Aorta (tissue), 5 donors: ENCODE measurements at regions of chr18 and their contacts with region 1.

Region 1: DNA sequence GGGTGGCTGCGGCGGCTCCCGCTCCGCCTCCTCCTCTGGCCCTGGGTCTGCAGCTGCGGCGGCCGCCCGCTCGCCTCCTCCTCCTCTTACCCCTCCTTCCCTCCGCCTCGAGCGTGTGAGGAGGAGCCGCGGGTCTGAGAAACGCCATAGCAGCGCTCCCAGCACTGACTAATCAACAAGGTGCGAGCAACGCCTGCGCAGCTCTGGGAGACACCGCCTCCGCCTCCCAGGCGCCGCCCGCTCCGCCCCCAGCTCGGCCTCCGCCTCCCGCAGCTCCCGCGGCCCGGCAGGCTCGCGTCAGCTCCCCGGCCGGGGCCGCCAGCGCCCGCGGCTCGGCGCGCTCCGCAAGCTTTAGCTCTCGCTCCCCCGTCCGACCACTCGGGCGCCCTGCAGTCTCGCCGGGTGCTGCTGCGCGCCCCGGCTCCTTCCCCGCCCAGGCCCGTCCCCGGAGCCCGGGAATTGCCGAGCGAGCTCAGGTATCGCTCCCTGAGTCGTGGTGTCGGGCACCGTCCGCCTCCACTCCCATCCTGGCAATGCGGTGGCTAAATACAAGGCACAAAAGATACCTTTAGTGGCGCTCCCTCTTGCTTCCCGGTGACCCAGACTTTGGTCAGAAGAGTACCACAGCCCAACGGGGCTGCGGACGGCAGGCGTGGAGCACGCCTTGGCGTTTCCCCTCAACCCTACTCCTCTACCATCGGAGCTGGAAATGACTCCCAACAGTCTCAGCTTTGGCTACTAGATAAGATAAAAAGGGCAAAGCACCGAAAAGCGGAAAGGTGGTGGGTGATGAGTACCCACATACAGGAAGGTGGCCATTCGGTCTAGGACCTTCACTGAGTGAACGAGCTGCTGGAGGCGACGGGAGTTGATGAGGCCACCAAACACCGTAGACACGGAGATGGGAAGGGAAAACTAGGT is at the start of gene GAREM1:
- DNase-seq: peak; percentile 97
- ATAC-seq: peak; percentile 96
- H3K4me3 ChIP-seq: peak within 1 kb of the TSS; percentile 93 to 100
- H3K27ac ChIP-seq: peak within 1 kb of the TSS; percentile 87 to 88
- H3K4me1 ChIP-seq: peaks cover 0 to 7% of the 10 kb centered on the region in 2 donors
- H3K27me3 ChIP-seq: no peaks in the 10 kb centered on the region
- total RNA-seq, gene GAREM1: 10.7 to 24.0 TPM

Region 2: DNA sequence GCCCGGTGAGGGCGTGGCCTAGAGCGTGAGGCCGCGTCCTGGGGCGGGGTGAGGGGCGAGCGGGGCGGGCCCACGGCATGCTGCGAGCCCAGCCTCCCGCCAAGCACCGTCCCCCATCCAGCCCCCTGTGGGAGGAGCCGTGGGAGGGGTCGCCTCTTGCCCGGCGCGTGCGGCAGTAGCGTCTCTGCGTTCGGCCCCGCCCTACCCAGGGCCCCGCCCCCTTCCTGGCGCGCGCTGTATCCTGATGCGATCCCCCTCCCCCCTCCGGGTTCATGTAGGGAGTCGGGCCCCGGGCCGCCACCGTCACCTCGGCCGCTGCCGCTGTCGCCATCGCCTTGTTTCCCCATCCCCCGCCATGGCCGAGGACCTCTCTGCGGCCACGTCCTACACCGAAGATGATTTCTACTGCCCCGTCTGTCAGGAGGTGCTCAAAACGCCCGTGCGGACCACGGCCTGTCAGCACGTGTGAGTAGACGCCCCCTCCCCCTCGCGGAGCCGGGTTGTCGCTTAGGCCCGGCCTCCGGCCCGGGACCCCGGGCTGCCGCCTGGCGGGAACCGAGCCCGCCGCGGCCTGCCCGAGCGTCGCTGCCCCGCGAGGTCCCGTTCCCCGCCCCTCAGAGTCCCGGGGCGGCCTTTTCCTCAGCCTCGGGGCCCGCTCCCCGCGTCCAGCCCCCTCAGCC is 378.4 kb before region 1 on chr18:
- intact Hi-C with region 1: loop called (anchors 5 to 10 kb)
- DNase-seq: peak; percentile 100
- ATAC-seq: peak; percentile 99
- H3K4me3 ChIP-seq: peak overlapping the region; percentile 51 to 57
- H3K27ac ChIP-seq: peak overlapping the region; percentile 3 to 50
- H3K4me1 ChIP-seq: no peaks in the 10 kb centered on the region
- H3K27me3 ChIP-seq: no peaks in the 10 kb centered on the region

Region 3: GRCh38 chr18:32158108-32158624 is 312.8 kb before region 1 on chr18:
- intact Hi-C with region 1: loop called in 1 of 2 experiments (anchors 5 kb)
- DNase-seq: peak; percentile 84 to 89
- ATAC-seq: peak; percentile 96
- H3K4me3 ChIP-seq: peak overlapping the region; percentile 42 to 52
- H3K27ac ChIP-seq: no peak overlapping the region
- H3K4me1 ChIP-seq: no peaks in the 10 kb centered on the region
- H3K27me3 ChIP-seq: no peaks in the 10 kb centered on the region

Region 4: DNA sequence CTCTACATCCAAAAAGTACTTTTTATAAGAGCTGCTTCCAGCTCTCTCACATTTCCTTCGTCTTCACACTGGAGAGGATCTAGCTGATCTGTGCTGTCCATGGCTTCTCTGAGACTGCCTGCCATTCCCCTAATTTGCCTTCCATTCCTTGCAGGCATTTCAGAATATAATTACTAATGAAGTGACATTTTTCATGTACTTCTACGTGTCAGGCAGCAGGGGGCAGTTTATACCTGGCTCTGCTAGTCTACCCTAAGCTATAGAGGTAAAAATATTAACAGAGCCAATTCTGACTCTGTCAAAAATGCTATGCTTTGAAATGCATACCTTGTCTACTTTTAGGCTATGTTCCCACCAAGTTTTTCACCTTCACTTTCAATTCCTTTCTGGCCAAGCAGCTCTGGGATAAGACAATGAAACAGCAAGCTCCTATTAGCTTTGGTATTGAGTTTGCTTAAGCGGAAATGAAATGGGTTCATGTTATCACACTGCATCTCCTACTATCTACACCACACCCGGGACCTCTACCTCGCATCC is 199.2 kb before region 1 on chr18:
- intact Hi-C with region 1: loop called (anchors 1 to 2 kb)
- DNase-seq: no peak
- ATAC-seq: peak; percentile 71
- H3K4me3 ChIP-seq: no peak overlapping the region
- H3K27ac ChIP-seq: no peak overlapping the region
- H3K4me1 ChIP-seq: peaks cover 0 to 5% of the 10 kb centered on the region in 2 donors
- H3K27me3 ChIP-seq: no peaks in the 10 kb centered on the region

Region 5: GRCh38 chr18:32289483-32290075 is 181.4 kb before region 1 on chr18:
- intact Hi-C with region 1: loop called in 1 of 2 experiments (anchors 5 kb)
- DNase-seq: no peak
- ATAC-seq: peak; percentile 65
- H3K4me3 ChIP-seq: no peak overlapping the region
- H3K27ac ChIP-seq: no peak overlapping the region
- H3K4me1 ChIP-seq: no peaks in the 10 kb centered on the region
- H3K27me3 ChIP-seq: no peaks in the 10 kb centered on the region

Region 6: DNA sequence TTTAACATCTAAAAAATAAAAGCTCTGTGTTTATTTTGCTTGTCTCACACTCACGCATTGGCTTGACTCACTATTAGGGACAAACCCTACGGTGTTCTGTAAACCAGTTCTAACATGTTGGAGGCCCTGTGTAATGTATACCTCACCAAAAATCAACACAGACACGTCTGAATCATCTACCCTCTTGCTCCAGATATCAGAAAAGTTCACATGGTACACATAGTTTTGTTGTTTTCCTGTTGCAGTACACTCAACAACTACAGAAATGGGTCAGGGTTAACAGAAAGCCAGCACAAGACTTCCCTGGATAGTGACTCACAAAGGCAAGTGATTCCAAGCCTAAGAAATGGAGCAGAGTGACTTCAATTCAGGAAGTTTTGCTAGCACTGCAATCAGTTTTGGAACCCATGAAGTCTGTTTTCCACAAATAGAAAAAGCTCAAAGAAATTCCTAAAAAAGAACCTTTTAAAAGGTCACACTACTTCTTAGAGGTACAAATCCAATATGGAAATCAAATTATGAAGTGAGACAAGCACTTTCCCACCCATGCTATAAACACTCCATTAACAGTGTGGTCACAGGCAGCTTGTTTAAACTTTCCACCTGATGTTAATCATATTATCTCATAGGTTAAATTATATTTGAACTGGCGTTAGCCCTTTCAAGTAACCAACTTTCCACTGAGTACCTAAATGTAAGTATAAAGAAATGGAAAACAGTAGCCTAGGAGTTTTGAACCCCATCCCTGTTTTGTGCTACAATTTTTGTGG is 87.7 kb before region 1 on chr18:
- intact Hi-C with region 1: loop called in 1 of 2 experiments (anchors 1 kb)
- DNase-seq: no peak
- ATAC-seq: peak; percentile 88
- H3K4me3 ChIP-seq: no peak overlapping the region
- H3K27ac ChIP-seq: peak overlapping the region in 1 of 2 donors; percentile 32
- H3K4me1 ChIP-seq: peaks cover 4 to 13% of the 10 kb centered on the region in 2 donors
- H3K27me3 ChIP-seq: no peaks in the 10 kb centered on the region

Region 7: DNA sequence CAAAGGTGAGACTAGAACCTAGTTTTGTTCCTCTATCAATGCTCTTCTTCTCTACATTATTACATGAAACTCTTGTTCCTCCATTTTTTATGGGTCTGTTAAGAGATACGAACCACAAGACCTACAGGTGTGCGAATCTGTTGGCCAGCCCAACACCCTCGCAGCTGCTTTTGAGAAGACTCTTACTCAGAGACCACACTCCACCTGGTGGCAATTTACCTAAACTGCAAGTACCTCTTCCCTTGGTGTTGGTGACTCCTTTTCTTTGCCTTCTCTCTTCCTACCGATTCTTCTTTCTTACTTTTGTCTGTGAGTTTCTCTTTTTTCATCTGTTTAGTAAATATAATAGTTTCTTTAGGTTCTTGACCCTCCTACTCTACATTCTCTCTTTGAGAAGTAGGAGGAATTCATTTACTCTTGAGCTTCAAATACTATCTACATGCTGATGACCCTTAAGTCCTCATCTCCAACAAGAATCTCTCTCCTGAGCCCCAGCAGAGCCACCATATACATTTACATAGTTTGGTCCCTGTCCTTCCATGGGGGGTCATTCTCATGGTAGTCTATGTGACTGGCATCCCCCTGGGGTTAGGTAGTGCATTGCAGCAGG is 81.6 kb after region 1 on chr18:
- intact Hi-C with region 1: loop called in 1 of 2 experiments (anchors 5 kb)
- DNase-seq: no peak
- ATAC-seq: peak; percentile 72
- H3K4me3 ChIP-seq: no peak overlapping the region
- H3K27ac ChIP-seq: no peak overlapping the region
- H3K4me1 ChIP-seq: no peaks in the 10 kb centered on the region
- H3K27me3 ChIP-seq: no peaks in the 10 kb centered on the region

Region 8: DNA sequence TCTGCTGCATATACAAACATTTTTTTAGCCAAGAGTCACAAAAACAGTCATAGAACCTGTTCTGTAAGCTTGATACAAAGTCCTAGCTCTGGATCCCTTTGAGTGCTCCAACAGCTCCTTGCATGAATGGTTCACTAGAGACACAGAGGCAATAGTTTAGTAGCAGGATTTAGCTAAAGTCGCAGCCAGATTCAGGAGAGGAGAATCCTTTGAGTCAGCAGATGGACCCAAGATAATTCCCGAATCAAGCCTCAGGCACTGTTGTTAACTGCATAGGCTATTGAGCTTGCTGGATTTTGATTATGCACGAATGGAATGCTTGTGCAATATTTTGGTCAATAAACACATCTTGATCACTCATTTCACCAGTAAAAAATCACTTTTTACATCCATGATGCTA is 153.3 kb after region 1 on chr18:
- intact Hi-C with region 1: no loop called
- DNase-seq: no peak
- ATAC-seq: no peak
- H3K4me3 ChIP-seq: no peak overlapping the region
- H3K27ac ChIP-seq: no peak overlapping the region
- H3K4me1 ChIP-seq: no peaks in the 10 kb centered on the region
- H3K27me3 ChIP-seq: no peaks in the 10 kb centered on the region